ENCODE measurements at regions of chr19 and their contacts with region 1.

Region 1: GRCh38 chr19:46513461-46514236 is 18.0 kb upstream of the PNMA8B start:
- DNase-seq: peak; percentile 63 to 88 (median 78)
- ATAC-seq: peak; percentile 73
- H3K4me3 ChIP-seq: no peak overlapping the region
- H3K4me3 Mint-ChIP-seq: no peak overlapping the region
- H3K27ac ChIP-seq: no peak overlapping the region
- H3K27ac Mint-ChIP-seq: no peak overlapping the region
- H3K4me1 ChIP-seq: peaks cover 17% of the 10 kb centered on the region
- H3K4me1 Mint-ChIP-seq: peaks cover 14% of the 10 kb centered on the region
- H3K27me3 ChIP-seq: peaks cover 0 to 4% of the 10 kb centered on the region in 2 experiments
- H3K27me3 Mint-ChIP-seq: peaks cover 20% of the 10 kb centered on the region
- CTCF ChIP-seq: peak; percentile 94

Region 2: GRCh38 chr19:46283771-46284170 is 229.9 kb before region 1 on chr19:
- CTCF ChIA-PET with region 1: interaction called, 10 read pairs
- POLR2A ChIA-PET with region 1: no interaction called
- intact Hi-C with region 1: loop called (anchors 1 to 10 kb)
- DNase-seq: no peak
- ATAC-seq: no peak
- H3K4me3 ChIP-seq: no peak overlapping the region
- H3K4me3 Mint-ChIP-seq: no peak overlapping the region
- H3K27ac ChIP-seq: no peak overlapping the region
- H3K27ac Mint-ChIP-seq: no peak overlapping the region
- H3K4me1 ChIP-seq: no peaks in the 10 kb centered on the region
- H3K4me1 Mint-ChIP-seq: no peaks in the 10 kb centered on the region
- H3K27me3 ChIP-seq: no peaks in the 10 kb centered on the region
- H3K27me3 Mint-ChIP-seq: peaks cover 9% of the 10 kb centered on the region
- CTCF ChIP-seq: no peak

Region 3: GRCh38 chr19:46288896-46289588 is 224.6 kb before region 1 on chr19:
- CTCF ChIA-PET with region 1: interaction called, 3 read pairs
- POLR2A ChIA-PET with region 1: no interaction called
- intact Hi-C with region 1: loop called in 1 of 2 experiments (anchors 10 kb)
- DNase-seq: no peak
- ATAC-seq: no peak
- H3K4me3 ChIP-seq: no peak overlapping the region
- H3K4me3 Mint-ChIP-seq: no peak overlapping the region
- H3K27ac ChIP-seq: no peak overlapping the region
- H3K27ac Mint-ChIP-seq: no peak overlapping the region
- H3K4me1 ChIP-seq: no peaks in the 10 kb centered on the region
- H3K4me1 Mint-ChIP-seq: no peaks in the 10 kb centered on the region
- H3K27me3 ChIP-seq: no peaks in the 10 kb centered on the region
- H3K27me3 Mint-ChIP-seq: peaks cover 3% of the 10 kb centered on the region
- CTCF ChIP-seq: no peak

Region 4: DNA sequence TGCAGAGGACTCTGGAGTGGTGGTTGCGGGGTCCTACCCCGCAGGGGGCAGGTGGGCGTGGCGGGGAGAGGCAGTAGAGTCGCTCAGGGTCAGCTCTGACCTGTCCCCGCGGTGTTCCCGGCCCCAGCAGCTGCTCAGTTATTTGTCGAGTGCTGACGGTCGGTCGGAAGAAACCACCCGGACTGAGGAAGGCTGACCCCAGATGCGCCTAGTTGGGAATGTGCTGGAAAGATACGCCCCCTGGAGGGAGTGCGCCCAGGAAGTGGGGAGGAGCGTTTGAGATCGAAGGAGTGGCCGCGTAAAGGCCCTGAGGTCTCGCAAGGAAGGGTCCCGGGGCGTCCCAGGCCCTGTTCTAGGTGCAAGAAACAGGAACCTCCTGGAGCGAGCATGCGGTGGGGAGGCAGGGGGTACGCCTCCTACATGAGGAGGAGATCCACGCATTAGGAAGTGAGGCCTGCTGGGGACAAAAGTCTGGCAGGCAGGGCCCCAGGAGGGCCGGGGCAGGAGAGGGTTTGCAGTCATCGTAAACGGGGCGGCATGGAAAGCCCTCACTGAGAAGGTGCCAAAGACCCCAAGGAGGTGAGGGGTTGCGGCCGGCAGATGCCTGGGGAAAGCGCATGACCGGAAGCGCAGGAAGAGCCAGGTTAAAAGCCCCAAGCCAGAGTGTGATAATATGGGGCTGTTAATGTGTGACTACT is 109.4 kb before region 1 on chr19:
- CTCF ChIA-PET with region 1: interaction called, 35 read pairs
- POLR2A ChIA-PET with region 1: interaction called, 3 read pairs
- intact Hi-C with region 1: loop called (anchors 1 kb)
- DNase-seq: no peak
- ATAC-seq: no peak
- H3K4me3 ChIP-seq: peak overlapping the region; percentile 21 to 37
- H3K4me3 Mint-ChIP-seq: peak overlapping the region; percentile 70
- H3K27ac ChIP-seq: no peak overlapping the region
- H3K27ac Mint-ChIP-seq: no peak overlapping the region
- H3K4me1 ChIP-seq: peaks cover 16% of the 10 kb centered on the region
- H3K4me1 Mint-ChIP-seq: peaks cover 21% of the 10 kb centered on the region
- H3K27me3 ChIP-seq: peaks cover 36% of the 10 kb centered on the region in 2 experiments
- H3K27me3 Mint-ChIP-seq: peaks cover 64% of the 10 kb centered on the region
- CTCF ChIP-seq: no peak

Region 5: GRCh38 chr19:46487802-46488445 is 25.7 kb before region 1 on chr19:
- CTCF ChIA-PET with region 1: interaction called, 6 read pairs
- POLR2A ChIA-PET with region 1: no interaction called
- intact Hi-C with region 1: loop called in 1 of 2 experiments (anchors 2 kb)
- DNase-seq: peak; percentile 58 to 86 (median 73)
- ATAC-seq: peak; percentile 87
- H3K4me3 ChIP-seq: no peak overlapping the region
- H3K4me3 Mint-ChIP-seq: no peak overlapping the region
- H3K27ac ChIP-seq: no peak overlapping the region
- H3K27ac Mint-ChIP-seq: no peak overlapping the region
- H3K4me1 ChIP-seq: peaks cover 33% of the 10 kb centered on the region
- H3K4me1 Mint-ChIP-seq: peaks cover 22% of the 10 kb centered on the region
- H3K27me3 ChIP-seq: peaks cover 42 to 46% of the 10 kb centered on the region in 2 experiments
- H3K27me3 Mint-ChIP-seq: peaks cover 58% of the 10 kb centered on the region
- CTCF ChIP-seq: peak; percentile 76

Region 6: GRCh38 chr19:46529622-46530462 is 16.2 kb after region 1 on chr19:
- CTCF ChIA-PET with region 1: interaction called, 459 read pairs
- POLR2A ChIA-PET with region 1: interaction called, 3 read pairs
- intact Hi-C with region 1: loop called in 1 of 2 experiments (anchors 1 kb)
- DNase-seq: peak; percentile 57 to 88 (median 74)
- ATAC-seq: peak; percentile 75
- H3K4me3 ChIP-seq: no peak overlapping the region
- H3K4me3 Mint-ChIP-seq: no peak overlapping the region
- H3K27ac ChIP-seq: no peak overlapping the region
- H3K27ac Mint-ChIP-seq: no peak overlapping the region
- H3K4me1 ChIP-seq: peaks cover 4% of the 10 kb centered on the region
- H3K4me1 Mint-ChIP-seq: peaks cover 13% of the 10 kb centered on the region
- H3K27me3 ChIP-seq: peaks cover 0 to 2% of the 10 kb centered on the region in 2 experiments
- H3K27me3 Mint-ChIP-seq: no peaks in the 10 kb centered on the region
- CTCF ChIP-seq: peak; percentile 99

Region 7: GRCh38 chr19:46542428-46543230 is 29.0 kb after region 1 on chr19:
- CTCF ChIA-PET with region 1: interaction called, 459 read pairs
- POLR2A ChIA-PET with region 1: no interaction called
- intact Hi-C with region 1: loop called (anchors 1 kb)
- DNase-seq: peak; percentile 59 to 87 (median 82)
- ATAC-seq: peak; percentile 67
- H3K4me3 ChIP-seq: no peak overlapping the region
- H3K4me3 Mint-ChIP-seq: no peak overlapping the region
- H3K27ac ChIP-seq: no peak overlapping the region
- H3K27ac Mint-ChIP-seq: no peak overlapping the region
- H3K4me1 ChIP-seq: no peaks in the 10 kb centered on the region
- H3K4me1 Mint-ChIP-seq: peaks cover 3% of the 10 kb centered on the region
- H3K27me3 ChIP-seq: peaks cover 0 to 3% of the 10 kb centered on the region in 2 experiments
- H3K27me3 Mint-ChIP-seq: no peaks in the 10 kb centered on the region
- CTCF ChIP-seq: peak; percentile 86